ENCODE measurements at regions of chr12 and their contacts with region 1.

Region 1: DNA sequence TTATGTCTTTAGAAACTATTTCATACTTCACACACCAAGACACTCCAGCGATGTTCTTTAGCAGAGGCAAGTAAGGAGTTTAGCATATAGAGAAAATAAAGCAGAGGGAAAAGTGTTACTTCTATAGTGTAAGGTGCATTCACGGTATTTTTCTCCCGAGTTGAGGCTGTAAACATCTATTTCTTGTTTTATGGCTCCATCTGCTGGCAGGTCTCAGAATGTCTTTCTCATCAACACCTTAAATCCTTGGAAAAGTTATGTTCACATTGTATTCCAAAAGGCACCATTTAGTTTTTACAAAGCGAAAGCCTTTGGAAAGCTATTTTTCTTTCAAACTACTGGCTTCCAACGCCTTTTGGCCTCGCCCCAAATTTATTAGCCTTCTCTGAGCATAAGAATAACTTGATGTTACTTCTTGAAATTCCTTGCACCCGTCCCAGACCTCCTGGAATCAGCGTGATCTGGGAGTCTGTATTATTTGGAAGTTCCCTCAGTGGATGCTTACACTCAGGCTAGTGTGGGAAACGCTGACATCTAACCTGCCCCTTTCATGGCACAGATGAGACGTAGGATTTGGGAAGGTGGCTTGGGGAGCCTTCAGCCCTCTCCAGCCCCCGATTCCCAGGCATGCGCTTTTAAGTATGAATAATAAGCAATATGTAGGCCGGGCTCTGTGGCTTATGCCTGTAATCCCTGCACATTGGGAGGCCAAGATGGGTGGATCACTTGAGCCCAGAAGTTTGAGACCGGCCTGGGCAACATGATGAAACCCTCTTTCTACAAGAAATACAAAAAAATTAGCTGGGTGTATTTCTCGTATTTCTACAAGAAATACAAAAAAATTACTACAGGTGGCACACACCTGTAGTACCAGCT is 1.9 kb upstream of the PIWIL1 start:
- DNase-seq: peak; percentile 48
- H3K4me3 Mint-ChIP-seq: no peak overlapping the region
- H3K27ac Mint-ChIP-seq: no peak overlapping the region
- H3K4me1 Mint-ChIP-seq: peaks cover 6% of the 10 kb centered on the region
- H3K27me3 Mint-ChIP-seq: peaks cover 38% of the 10 kb centered on the region

Region 2: GRCh38 chr12:130041983-130042812 is 293.6 kb before region 1 on chr12:
- CTCF ChIA-PET with region 1: interaction called, 16 read pairs
- intact Hi-C with region 1: loop called (anchors 1 kb)
- DNase-seq: peak; percentile 77
- H3K4me3 Mint-ChIP-seq: no peak overlapping the region
- H3K27ac Mint-ChIP-seq: no peak overlapping the region
- H3K4me1 Mint-ChIP-seq: no peaks in the 10 kb centered on the region
- H3K27me3 Mint-ChIP-seq: peaks cover 65% of the 10 kb centered on the region

Region 3: GRCh38 chr12:130049666-130050065 is 286.1 kb before region 1 on chr12:
- CTCF ChIA-PET with region 1: interaction called, 16 read pairs
- intact Hi-C with region 1: loop called (anchors 1 kb)
- DNase-seq: no peak
- H3K4me3 Mint-ChIP-seq: no peak overlapping the region
- H3K27ac Mint-ChIP-seq: no peak overlapping the region
- H3K4me1 Mint-ChIP-seq: peaks cover 12% of the 10 kb centered on the region
- H3K27me3 Mint-ChIP-seq: peaks cover 33% of the 10 kb centered on the region

Region 4: DNA sequence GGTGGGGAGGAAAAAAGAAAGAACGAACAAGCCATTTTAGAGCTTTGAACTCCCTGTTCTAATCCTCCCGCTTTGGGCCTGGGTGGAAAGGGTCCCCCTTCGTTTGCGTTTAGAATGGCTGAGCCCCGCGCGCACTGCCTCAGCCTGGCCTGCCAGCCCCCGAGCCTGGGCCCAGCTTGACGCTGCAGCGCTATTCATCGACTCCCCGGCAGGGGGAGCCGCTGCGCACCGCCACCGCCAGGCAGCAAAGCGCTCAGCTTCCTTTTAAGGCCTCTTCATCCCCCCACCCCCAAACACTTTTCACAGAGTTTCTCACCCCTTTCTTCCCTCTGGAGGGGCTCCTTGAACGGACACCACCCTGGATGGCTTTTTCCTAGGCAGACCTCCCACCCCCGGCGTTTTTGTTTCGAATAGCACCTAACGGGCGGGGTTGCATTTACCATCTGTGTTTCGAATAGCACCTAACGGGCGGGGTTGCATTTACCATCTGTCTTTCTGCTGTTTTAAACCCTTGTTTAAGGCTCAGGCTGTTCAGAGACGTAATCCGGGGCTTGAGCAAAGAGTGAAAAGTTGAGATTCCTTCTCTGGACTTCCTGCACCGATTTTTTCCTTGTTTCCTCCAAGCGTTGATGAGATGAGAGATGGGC is 54.5 kb before region 1 on chr12:
- CTCF ChIA-PET with region 1: interaction called, 6 read pairs
- intact Hi-C with region 1: loop called (anchors 1 kb)
- DNase-seq: peak; percentile 57
- H3K4me3 Mint-ChIP-seq: no peak overlapping the region
- H3K27ac Mint-ChIP-seq: no peak overlapping the region
- H3K4me1 Mint-ChIP-seq: peaks cover 4% of the 10 kb centered on the region
- H3K27me3 Mint-ChIP-seq: peaks cover 17% of the 10 kb centered on the region

Region 5: GRCh38 chr12:130747867-130748740 is 412.3 kb after region 1 on chr12:
- CTCF ChIA-PET with region 1: no interaction called
- intact Hi-C with region 1: loop called (anchors 2 kb)
- DNase-seq: peak; percentile 87
- H3K4me3 Mint-ChIP-seq: no peak overlapping the region
- H3K27ac Mint-ChIP-seq: no peak overlapping the region
- H3K4me1 Mint-ChIP-seq: peaks cover 6% of the 10 kb centered on the region
- H3K27me3 Mint-ChIP-seq: peaks cover 7% of the 10 kb centered on the region